Dorsolateral prefrontal cortex (tissue), 120 donors: ENCODE measurements at regions of chr13 and their contacts with region 1.

Region 1: GRCh38 chr13:66994097-66994496 is 236.0 kb downstream of the PCDH9 start:
- DNase-seq: peak; percentile 67 to 91 (median 84)
- H3K4me3 ChIP-seq: peak overlapping the region; percentile 12 to 70 (median 50)
- H3K27ac ChIP-seq: peak overlapping the region; percentile 7 to 94 (median 86)
- H3K27me3 ChIP-seq: no peaks in the 10 kb centered on the region
- CTCF ChIP-seq: peak; percentile 37 to 85 (median 74)

Region 2: DNA sequence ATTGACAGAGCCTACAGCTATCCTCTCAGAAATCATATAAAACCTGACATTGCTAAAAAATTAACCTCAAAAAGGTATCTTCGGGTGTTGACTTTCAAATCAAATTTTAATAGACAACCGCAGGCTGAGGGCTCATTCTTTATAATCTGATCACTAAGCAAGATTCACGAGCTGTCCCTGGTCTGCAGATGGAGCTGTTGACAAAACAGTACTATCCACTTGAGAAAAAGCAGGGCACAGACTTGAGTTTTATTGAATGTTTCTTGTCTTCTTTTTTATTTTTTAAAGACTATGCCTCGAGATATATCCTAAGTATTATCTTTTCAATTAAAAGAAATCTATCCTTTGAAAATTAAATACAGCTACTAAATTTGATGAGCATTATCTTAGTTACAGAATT is 304.5 kb before region 1 on chr13:
- intact Hi-C with region 1: loop called (anchors 10 kb)
- DNase-seq: peak in 2 of 10 donors; percentile 47 to 67
- H3K4me3 ChIP-seq: peak overlapping the region in 5 of 59 donors; percentile 1 to 26 (median 11)
- H3K27ac ChIP-seq: peak overlapping the region in 18 of 59 donors; percentile 0 to 70 (median 19)
- H3K27me3 ChIP-seq: no peaks in the 10 kb centered on the region
- CTCF ChIP-seq: peak in 55 of 56 donors; percentile 19 to 72 (median 53)

Region 3: DNA sequence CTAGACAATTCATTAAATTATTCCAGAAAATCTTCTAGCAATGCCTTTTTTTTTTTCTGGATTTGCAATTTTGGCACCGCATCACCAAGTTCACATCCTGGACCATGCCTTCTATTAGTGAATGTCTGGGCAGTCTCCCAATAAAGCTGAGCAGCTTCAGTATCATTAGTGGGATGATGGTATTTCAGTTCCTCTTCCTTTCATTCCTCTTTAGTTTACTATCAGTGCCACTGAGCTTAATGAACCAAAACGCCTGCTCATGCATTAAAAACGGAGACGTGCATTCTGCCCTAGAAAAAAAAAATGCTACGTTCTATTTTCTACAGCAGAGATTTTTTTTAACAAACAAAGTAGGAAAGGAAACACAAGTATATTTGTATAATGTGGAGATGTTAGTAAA is 107.0 kb before region 1 on chr13:
- intact Hi-C with region 1: loop called in 1 of 2 experiments (anchors 5 kb)
- DNase-seq: peak in 1 of 10 donors; percentile 11
- H3K4me3 ChIP-seq: peak overlapping the region in 55 of 59 donors; percentile 2 to 52 (median 30)
- H3K27ac ChIP-seq: peak overlapping the region in 56 of 59 donors; percentile 1 to 94 (median 86)
- H3K27me3 ChIP-seq: no peaks in the 10 kb centered on the region
- CTCF ChIP-seq: peak in 1 of 56 donors; percentile 12

Region 4: DNA sequence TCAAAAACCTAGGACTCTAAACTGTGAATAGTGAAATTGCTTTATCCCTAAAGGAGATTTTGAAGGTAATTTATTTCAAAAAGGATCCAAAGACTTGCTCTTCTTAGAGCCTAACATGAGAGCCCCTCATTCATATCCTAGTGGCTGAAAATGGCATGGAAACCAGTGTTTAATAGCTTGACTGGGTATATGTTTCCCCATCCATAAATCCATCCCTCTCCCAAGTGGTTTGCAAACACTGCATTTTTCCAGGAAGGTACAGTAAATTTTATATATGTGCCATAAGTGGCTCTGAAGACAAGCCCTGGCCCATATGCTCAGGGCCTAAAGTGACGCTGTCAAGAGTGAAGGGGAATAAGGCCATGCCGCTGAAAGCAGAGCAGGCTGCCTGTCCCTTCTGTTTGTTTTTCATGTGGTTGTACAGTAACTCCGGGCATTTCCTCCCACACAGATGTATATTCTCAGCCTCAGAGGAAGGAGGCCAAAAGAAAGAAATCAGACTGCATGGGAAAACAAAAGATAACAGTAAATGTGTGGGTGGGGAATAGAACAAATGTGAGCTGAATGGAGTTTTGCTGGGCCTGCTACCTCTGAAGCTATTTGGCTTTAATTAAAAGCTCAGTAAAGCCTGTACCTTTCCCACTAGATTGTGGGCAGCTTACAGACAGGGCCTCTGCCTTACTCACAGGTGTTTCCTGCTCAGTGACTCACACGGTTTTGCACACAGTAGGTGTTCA is 54.2 kb after region 1 on chr13:
- intact Hi-C with region 1: no loop called
- DNase-seq: no peak
- H3K4me3 ChIP-seq: no peak overlapping the region
- H3K27ac ChIP-seq: peak overlapping the region; percentile 33 to 100 (median 92)
- H3K27me3 ChIP-seq: no peaks in the 10 kb centered on the region
- CTCF ChIP-seq: peak in 4 of 56 donors; percentile 5 to 14 (median 8)

Region 5: GRCh38 chr13:67069117-67069767 is 75.1 kb after region 1 on chr13:
- intact Hi-C with region 1: loop called in 1 of 2 experiments (anchors 10 kb)
- DNase-seq: no peak
- H3K4me3 ChIP-seq: peak overlapping the region in 39 of 59 donors; percentile 2 to 43 (median 26)
- H3K27ac ChIP-seq: peak overlapping the region in 57 of 59 donors; percentile 18 to 100 (median 76)
- H3K27me3 ChIP-seq: no peaks in the 10 kb centered on the region
- CTCF ChIP-seq: peak in 1 of 56 donors; percentile 5

Region 6: DNA sequence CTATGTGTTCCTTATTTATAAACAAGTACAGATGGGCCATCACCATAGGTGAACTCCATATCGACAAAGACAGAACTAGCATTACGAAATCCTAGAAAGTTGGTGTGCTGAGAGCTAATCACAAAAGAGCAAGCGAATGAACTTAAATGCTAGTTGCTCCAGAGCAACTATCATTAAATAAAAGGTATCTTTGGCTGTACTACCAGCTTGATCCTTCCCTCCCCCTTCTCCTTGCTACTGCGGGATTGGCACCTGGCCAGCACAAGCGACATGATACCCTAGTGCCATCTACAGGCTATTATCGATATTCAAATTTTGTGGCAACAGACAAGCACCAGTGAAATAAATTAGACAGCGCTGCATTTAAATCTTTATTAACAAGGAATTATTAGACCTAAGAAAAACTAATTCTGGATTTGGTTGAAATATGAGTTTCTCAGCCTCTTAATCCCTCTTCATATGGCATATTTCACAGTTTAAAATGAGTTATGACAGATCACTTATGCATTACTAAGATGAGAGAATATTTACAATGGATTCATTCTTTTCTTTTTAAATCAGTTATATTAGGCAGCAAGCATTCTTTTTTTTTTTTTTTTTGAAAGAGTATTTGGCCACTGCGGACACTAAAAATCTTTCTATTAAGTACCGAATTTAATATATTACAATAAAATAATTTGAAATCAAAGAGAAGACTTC is 230.2 kb after region 1 on chr13:
- intact Hi-C with region 1: loop called (anchors 5 to 10 kb)
- DNase-seq: peak; percentile 73 to 88 (median 84)
- H3K4me3 ChIP-seq: peak overlapping the region; percentile 53 to 97 (median 84)
- H3K27ac ChIP-seq: peak overlapping the region in 57 of 59 donors; percentile 26 to 99 (median 87)
- H3K27me3 ChIP-seq: no peaks in the 10 kb centered on the region
- CTCF ChIP-seq: peak; percentile 68 to 94 (median 84)

Region 7: DNA sequence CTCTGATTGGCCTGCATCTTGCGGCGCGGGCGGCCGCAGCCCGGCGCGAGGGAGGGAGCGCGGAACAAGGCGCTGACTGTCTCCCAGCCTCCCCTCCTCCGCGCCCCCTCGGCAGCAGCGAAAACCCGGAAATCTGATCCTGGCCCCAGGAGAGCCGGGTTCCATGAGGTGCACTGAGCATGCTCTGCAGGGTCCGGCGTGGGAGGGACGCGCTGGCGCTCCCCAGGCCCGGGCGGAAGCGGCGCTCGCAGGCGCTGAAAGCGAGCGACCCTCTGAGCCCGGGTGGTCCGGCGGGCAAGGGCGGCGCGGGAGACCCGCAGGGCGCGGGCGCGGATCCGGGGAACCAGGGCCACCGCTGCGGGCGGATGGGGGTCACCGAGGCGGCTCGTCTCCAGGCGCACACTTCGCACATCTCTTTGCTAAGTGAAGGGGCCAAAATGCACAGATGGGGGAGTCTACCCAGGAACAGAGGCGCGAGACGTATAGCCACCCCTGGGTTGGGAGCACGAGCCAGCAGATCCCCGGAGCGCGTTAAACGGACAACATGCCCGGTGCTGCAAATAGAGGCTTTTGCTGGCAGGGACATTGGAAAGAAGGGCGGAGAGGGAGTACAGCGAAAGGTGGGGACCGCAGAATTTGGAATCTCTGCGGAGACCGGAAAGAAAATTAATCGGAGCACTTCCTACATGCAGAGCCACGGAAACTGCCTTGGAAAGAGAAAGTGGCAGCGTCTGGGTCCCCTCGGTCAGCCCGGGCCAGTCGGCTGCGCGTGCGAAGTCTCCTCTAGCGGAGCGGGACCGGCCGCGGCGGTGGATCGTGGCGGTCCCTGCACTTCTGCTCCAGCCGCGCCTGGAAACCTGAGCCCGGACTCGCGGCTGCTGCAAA is 236.5 kb after region 1 on chr13:
- intact Hi-C with region 1: loop called (anchors 5 to 10 kb)
- DNase-seq: peak; percentile 39 to 99 (median 99)
- H3K4me3 ChIP-seq: peak overlapping the region; percentile 53 to 97 (median 84)
- H3K27ac ChIP-seq: peak overlapping the region; percentile 85 to 99 (median 96)
- H3K27me3 ChIP-seq: no peaks in the 10 kb centered on the region
- CTCF ChIP-seq: peak in 17 of 56 donors; percentile 5 to 44 (median 23)